HCT116 (cell line): ENCODE measurements at regions of chr1 and their contacts with region 1.

Region 1: GRCh38 chr1:10378081-10378841 is 20.6 kb upstream of the PGD start:
- DNase-seq: no peak
- ATAC-seq: no peak
- H3K4me3 ChIP-seq: no peak overlapping the region
- H3K27ac ChIP-seq: no peak overlapping the region
- H3K4me1 ChIP-seq: no peaks in the 10 kb centered on the region
- H3K27me3 ChIP-seq: no peaks in the 10 kb centered on the region
- CTCF ChIP-seq: no peak
- POLR2A ChIP-seq: no peak
- RAD21 ChIP-seq: no peak

Region 2: DNA sequence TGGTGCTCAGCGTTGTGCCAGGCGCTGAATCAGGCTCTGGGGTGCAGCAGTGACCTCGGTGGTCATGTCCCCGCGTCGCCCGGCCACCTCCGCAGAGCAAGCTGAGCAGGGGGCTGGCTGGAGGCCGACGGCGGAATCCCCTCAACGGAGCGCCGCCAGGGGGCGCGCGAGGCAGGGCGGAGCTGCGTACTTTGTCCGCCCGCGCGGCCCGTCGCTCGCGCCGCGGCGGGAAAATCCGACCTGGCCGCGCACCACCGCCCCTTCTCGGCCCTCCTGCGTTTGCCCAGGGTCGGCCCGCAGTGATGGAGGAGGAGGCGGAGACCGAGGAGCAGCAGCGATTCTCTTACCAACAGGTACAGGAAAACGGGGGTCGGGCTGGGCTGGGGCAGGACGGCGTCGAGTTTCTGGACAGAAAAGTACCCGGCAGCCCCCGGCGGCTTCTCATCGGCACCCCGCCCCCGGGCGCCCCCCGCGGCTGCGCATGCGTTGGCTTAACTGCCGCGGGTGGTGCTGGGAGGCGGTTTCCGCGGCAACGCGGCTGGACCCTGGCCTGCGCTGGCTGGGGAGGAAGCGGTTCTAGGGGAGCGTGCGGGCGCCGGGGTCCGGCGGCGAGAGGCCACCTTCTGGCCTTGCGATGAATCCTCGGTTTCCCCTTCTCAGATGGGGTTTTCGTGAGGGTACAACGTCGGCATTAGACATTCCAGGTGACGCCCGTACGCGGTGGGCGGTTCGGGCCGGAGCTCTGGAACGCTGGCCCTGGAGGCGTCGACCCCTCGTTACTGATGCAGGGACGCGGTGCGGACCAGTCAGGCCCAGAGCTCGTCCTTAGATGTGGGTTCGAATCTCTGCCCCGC is 52.2 kb after region 1 on chr1 and contains the start of gene CENPS:
- CTCF ChIA-PET with region 1: interaction called, 5 read pairs
- POLR2A ChIA-PET with region 1: no interaction called
- RAD21 ChIA-PET with region 1: no interaction called
- intact Hi-C with region 1: loop called (anchors 1 kb)
- DNase-seq: peak; percentile 68
- ATAC-seq: peak; percentile 86
- H3K4me3 ChIP-seq: peak within 1 kb of the TSS; percentile 67 to 90
- H3K27ac ChIP-seq: peak within 1 kb of the TSS; percentile 66
- H3K4me1 ChIP-seq: peaks cover 2 to 19% of the 10 kb centered on the region in 2 experiments; a peak in 3 of 4 replicates
- H3K27me3 ChIP-seq: no peaks in the 10 kb centered on the region
- CTCF ChIP-seq: peak; percentile 76 to 86 (median 84)
- POLR2A ChIP-seq: peak; percentile 70
- RAD21 ChIP-seq: peak; percentile 76
- total RNA-seq, gene CENPS: 21.9 TPM